Tibial artery (tissue), 4 donors: ENCODE measurements at regions of chr1 and their contacts with region 1.

Region 1: GRCh38 chr1:204363335-204364124 is 3.8 kb upstream of the PLEKHA6 start:
- DNase-seq: peak; percentile 56 to 82
- H3K4me3 ChIP-seq: peak overlapping the region; percentile 34 to 55
- H3K27ac ChIP-seq: peak overlapping the region; percentile 12 to 38
- H3K4me1 ChIP-seq: peaks cover 0 to 19% (median 15%) of the 10 kb centered on the region in 4 donors
- H3K27me3 ChIP-seq: peaks cover 0 to 32% of the 10 kb centered on the region in 2 donors
- CTCF ChIP-seq: peak; percentile 98 to 99

Region 2: GRCh38 chr1:204162231-204163074 is 201.1 kb before region 1 on chr1:
- intact Hi-C with region 1: loop called (anchors 2 kb)
- DNase-seq: peak; percentile 67 to 82
- H3K4me3 ChIP-seq: no peak overlapping the region
- H3K27ac ChIP-seq: no peak overlapping the region
- H3K4me1 ChIP-seq: no peaks in the 10 kb centered on the region
- H3K27me3 ChIP-seq: peaks cover 0 to 54% of the 10 kb centered on the region in 2 donors
- CTCF ChIP-seq: peak; percentile 96 to 100

Region 3: GRCh38 chr1:204219971-204220608 is 143.4 kb before region 1 on chr1:
- intact Hi-C with region 1: loop called (anchors 5 kb)
- DNase-seq: no peak
- H3K4me3 ChIP-seq: no peak overlapping the region
- H3K27ac ChIP-seq: no peak overlapping the region
- H3K4me1 ChIP-seq: no peaks in the 10 kb centered on the region
- H3K27me3 ChIP-seq: peaks cover 0 to 5% of the 10 kb centered on the region in 2 donors
- CTCF ChIP-seq: no peak

Region 4: GRCh38 chr1:204257954-204258752 is 105.4 kb before region 1 on chr1:
- intact Hi-C with region 1: loop called (anchors 5 kb)
- DNase-seq: no peak
- H3K4me3 ChIP-seq: no peak overlapping the region
- H3K27ac ChIP-seq: no peak overlapping the region
- H3K4me1 ChIP-seq: peaks cover 0 to 19% (median 9%) of the 10 kb centered on the region in 4 donors
- H3K27me3 ChIP-seq: no peaks in the 10 kb centered on the region
- CTCF ChIP-seq: peak; percentile 55 to 60